Natural killer cell (primary cell): ENCODE measurements at regions of chr22 and their contacts with region 1.

Region 1: GRCh38 chr22:42614312-42615091 is at the start of gene POLDIP3:
- DNase-seq: peak; percentile 99 to 100
- ATAC-seq: peak; percentile 70 to 90 (median 74)
- H3K4me3 ChIP-seq: peak within 1 kb of the TSS; percentile 70
- H3K4me3 Mint-ChIP-seq: peak within 1 kb of the TSS; percentile 97
- H3K27ac ChIP-seq: peak within 1 kb of the TSS; percentile 84
- H3K27ac Mint-ChIP-seq: peak within 1 kb of the TSS; percentile 100
- H3K4me1 ChIP-seq: peaks cover 44% of the 10 kb centered on the region
- H3K4me1 Mint-ChIP-seq: peaks cover 34 to 52% of the 10 kb centered on the region in 2 donors
- H3K27me3 ChIP-seq: no peaks in the 10 kb centered on the region
- H3K27me3 Mint-ChIP-seq: no peaks in the 10 kb centered on the region
- CTCF ChIP-seq: no peak
- total RNA-seq, gene POLDIP3: 66.1 to 82.8 (median 70.8) TPM

Region 2: DNA sequence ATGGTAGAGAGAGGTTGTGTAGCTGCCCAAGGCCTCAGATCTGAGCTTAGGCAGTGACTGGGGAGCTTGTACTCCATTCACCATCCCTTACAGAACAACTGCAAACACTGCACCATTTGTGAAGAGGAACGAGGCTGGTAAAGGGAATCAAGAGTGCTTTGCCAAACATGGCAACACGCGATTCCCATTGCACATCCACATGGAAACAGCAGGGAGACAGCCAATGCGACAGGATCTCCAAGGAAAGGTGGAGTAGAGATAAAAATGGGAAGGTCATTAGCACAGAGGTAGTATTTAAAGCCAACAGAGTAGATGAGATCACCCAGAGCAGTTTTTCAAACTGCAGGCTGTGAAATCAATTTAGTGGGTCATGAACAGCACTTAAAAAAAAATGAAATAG is 386.0 kb before region 1 on chr22:
- intact Hi-C with region 1: no loop called
- DNase-seq: no peak
- ATAC-seq: no peak
- H3K4me3 ChIP-seq: no peak overlapping the region
- H3K4me3 Mint-ChIP-seq: no peak overlapping the region
- H3K27ac ChIP-seq: no peak overlapping the region
- H3K27ac Mint-ChIP-seq: peak overlapping the region; percentile 9 to 44
- H3K4me1 ChIP-seq: no peaks in the 10 kb centered on the region
- H3K4me1 Mint-ChIP-seq: peaks cover 46 to 53% of the 10 kb centered on the region in 2 donors
- H3K27me3 ChIP-seq: no peaks in the 10 kb centered on the region
- H3K27me3 Mint-ChIP-seq: no peaks in the 10 kb centered on the region
- CTCF ChIP-seq: no peak

Region 3: DNA sequence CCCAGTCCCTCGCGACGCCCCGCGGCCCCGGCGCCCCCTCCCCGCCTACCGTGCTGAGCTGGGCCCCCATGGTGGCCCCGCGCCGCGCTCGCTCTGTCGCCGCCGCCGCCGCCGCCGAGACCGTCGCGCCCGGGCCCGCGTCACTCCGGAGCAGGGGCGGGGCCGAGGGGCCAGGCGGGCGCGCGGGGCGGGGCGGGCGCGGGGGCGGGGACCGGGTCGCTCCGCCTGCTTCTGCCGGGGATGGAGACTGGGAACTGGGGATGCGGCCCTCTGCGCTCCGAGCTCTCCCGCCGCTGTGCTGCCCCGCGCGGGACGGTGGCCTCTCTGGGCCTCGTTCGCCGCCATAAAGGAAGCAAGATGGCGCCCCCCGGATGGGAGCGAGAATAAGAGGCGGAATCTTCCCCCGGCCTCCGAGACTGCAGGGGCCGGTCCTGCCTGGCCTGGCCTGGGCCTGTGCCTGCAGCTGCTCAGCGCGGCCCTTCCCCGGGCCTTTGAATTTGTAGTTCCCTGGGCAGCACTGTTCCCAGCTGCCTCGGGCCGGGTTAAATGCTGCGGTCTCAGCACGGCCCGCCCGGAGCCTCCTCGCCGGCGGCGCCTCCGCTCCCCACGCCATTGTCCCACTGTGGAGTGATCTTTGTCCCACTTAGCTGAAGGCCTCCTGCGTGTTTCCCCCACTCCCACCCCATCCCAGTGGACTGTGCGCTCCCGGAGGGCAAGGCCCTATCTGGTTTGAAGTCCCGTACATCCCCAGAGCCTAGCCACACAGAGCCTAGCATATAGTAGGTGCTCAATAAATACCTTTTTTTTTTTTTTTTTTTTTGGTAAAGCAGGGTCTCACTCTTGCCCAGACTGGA is 35.0 kb after region 1 on chr22 and contains the start of gene CYB5R3:
- intact Hi-C with region 1: loop called (anchors 2 kb)
- DNase-seq: peak; percentile 78 to 82
- ATAC-seq: peak; percentile 77 to 88 (median 81)
- H3K4me3 ChIP-seq: peak within 1 kb of the TSS; percentile 55
- H3K4me3 Mint-ChIP-seq: peak within 1 kb of the TSS; percentile 91
- H3K27ac ChIP-seq: peak within 1 kb of the TSS; percentile 85
- H3K27ac Mint-ChIP-seq: peak within 1 kb of the TSS; percentile 78 to 92
- H3K4me1 ChIP-seq: peaks cover 49% of the 10 kb centered on the region
- H3K4me1 Mint-ChIP-seq: peaks cover 8 to 43% of the 10 kb centered on the region in 2 donors
- H3K27me3 ChIP-seq: no peaks in the 10 kb centered on the region
- H3K27me3 Mint-ChIP-seq: no peaks in the 10 kb centered on the region
- CTCF ChIP-seq: peak; percentile 16
- total RNA-seq, gene CYB5R3: 55.7 to 72.6 (median 68.0) TPM

Region 4: GRCh38 chr22:43187171-43188099 is 572.9 kb after region 1 on chr22:
- intact Hi-C with region 1: loop called (anchors 5 kb)
- DNase-seq: peak; percentile 94 to 99
- ATAC-seq: peak; percentile 87 to 94 (median 89)
- H3K4me3 ChIP-seq: peak overlapping the region; percentile 36
- H3K4me3 Mint-ChIP-seq: peak overlapping the region; percentile 79
- H3K27ac ChIP-seq: peak overlapping the region; percentile 85
- H3K27ac Mint-ChIP-seq: peak overlapping the region; percentile 91 to 93
- H3K4me1 ChIP-seq: peaks cover 19% of the 10 kb centered on the region
- H3K4me1 Mint-ChIP-seq: peaks cover 4 to 12% of the 10 kb centered on the region in 2 donors
- H3K27me3 ChIP-seq: no peaks in the 10 kb centered on the region
- H3K27me3 Mint-ChIP-seq: no peaks in the 10 kb centered on the region
- CTCF ChIP-seq: peak; percentile 51